Activated T-helper 2 cell treated with anti-CD3 and anti-CD28 coated beads, Interferon-gamma antibody, Interleukin-2, Interleukin-4, amounts not matched to agents 10 μg/mL and 5 μg/mL and 100 μg/mL, durations not matched to agents 14 hours and 24 hours and 36 hours (primary cell): ENCODE measurements at regions of chr2 and their contacts with region 1.

Region 1: DNA sequence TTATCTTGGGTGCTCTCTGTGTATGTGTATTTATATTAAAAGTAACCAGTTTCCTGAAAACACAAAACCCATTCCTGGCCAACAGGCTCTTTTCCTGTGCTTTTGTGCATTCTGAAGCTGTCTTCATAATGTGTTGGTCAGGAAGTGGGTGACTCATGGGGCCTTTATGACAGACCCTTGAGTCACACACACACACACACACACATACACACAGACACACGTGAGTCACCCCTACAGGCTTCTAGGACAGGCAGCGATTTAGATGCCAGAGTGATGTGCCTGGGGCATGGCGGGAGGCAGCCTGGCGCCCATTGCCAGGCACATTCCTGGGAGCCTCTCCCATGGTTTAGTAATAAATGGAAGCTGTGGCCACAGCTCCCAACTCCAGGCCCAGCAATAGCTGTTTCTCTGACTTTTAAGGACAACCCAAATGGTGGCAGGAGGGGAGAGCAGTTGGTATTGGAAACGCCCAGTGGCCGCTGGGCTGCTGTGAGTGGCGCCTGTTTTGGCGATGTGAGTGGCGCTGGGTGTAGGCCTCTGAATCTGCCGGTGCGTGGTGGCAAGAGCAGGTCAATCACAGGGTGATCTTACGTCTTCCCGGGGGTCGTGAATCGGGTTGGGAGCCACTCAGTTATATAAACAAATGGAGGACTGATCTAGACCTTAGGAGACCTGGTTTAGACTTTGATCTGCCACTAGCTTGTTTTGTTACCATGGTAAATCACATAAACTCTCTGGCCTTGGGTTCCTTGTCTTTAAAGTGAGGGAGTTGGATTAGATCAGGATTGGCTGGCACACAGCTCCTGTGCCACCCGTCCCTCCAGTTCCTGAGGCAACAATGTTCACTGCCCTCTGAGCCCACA is 150.7 kb upstream of the DLX2 start:
- DNase-seq: peak; percentile 28
- H3K4me3 Mint-ChIP-seq: no peak overlapping the region
- H3K27ac Mint-ChIP-seq: no peak overlapping the region
- H3K4me1 Mint-ChIP-seq: peaks cover 20% of the 10 kb centered on the region
- H3K27me3 Mint-ChIP-seq: peaks cover 13% of the 10 kb centered on the region

Region 2: GRCh38 chr2:172437419-172438341 is 184.3 kb after region 1 on chr2:
- intact Hi-C with region 1: loop called (anchors 10 kb)
- DNase-seq: peak; percentile 27
- H3K4me3 Mint-ChIP-seq: no peak overlapping the region
- H3K27ac Mint-ChIP-seq: no peak overlapping the region
- H3K4me1 Mint-ChIP-seq: peaks cover 42% of the 10 kb centered on the region
- H3K27me3 Mint-ChIP-seq: peaks cover 43% of the 10 kb centered on the region